BJ (cell line): ENCODE measurements at regions of chr11 and their contacts with region 1.

Region 1: DNA sequence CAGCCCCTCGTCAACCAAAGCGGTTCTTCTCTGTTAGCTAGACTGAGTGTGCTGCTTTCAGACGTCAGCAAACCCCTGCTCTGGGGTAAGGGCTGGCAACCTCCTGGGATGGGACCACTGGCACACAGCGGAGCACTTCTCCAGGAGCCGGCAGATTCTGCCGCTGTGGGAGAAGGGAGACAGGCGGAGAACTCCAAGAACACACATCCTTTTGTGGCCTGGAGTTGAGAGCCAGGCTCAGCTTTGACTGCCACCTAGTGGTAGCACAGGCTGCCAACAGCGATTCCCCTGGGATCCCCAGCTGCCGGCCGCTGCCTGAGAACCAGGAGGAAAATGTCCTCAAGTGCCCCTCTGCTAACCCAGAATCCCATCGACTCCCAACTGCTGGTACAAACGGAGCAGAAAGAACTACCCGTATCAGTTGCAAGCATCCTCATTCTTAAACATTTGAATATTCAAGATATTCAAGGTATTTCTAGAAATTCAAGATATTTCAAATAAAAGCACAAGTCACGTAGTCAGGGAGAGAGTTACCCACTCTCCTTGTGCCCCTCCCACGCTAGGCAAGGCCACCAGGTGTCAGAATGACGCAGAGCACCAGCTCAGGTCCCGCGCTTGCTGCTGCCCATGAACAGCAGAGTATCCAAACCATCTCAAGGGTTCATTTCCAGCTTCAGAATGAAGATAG is 4.9 kb downstream of the LTO1 start:
- DNase-seq: no peak
- H3K4me3 ChIP-seq: no peak overlapping the region
- H3K27me3 ChIP-seq: no peaks in the 10 kb centered on the region
- CTCF ChIP-seq: peak; percentile 97

Region 2: GRCh38 chr11:69308491-69308911 is 361.8 kb before region 1 on chr11:
- CTCF ChIA-PET with region 1: no interaction called
- POLR2A ChIA-PET with region 1: no interaction called
- DNase-seq: no peak
- H3K4me3 ChIP-seq: no peak overlapping the region
- H3K27me3 ChIP-seq: no peaks in the 10 kb centered on the region
- CTCF ChIP-seq: no peak

Region 3: DNA sequence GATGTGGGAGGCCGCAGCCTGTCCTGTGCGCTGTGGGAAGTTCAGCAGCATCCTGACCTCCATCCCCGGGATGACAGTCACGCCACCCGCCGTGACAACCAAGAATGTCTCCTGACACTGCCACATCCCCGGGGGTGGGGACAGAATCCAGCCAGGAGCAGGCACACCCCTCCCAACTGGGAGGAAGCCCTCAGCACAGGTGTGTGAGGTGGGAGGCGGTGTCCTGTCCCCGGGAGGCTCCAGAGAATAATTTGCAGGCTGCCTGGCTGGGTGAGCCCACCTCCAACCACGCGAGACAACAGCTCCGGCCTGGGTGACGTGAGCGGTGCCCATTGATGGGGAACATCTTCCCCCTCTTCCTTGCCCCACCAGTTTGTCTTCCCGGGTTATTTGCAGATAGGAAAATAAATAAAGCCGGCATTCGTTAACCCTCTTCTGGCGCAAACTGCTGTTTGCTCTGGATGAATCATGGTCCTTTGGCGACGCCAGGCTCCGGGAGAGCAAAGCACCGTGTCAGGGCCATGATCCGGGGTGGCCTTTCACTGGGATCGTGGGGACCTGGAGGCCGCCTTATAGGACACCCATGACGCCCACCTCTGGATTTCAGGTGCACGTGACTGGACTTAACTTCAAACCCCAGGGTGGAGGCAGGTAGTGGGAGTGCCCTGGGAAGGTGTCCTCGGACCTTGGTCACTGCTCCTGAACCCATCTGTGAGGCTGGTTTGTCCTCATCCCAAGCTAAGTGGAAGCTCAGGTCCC is 15.6 kb before region 1 on chr11:
- CTCF ChIA-PET with region 1: interaction called, 16 read pairs
- POLR2A ChIA-PET with region 1: no interaction called
- DNase-seq: no peak
- H3K4me3 ChIP-seq: no peak overlapping the region
- H3K27me3 ChIP-seq: no peaks in the 10 kb centered on the region
- CTCF ChIP-seq: no peak